Naive thymus-derived CD4-positive, alpha-beta T cell (primary cell): ENCODE measurements at regions of chr4 and their contacts with region 1.

Region 1: DNA sequence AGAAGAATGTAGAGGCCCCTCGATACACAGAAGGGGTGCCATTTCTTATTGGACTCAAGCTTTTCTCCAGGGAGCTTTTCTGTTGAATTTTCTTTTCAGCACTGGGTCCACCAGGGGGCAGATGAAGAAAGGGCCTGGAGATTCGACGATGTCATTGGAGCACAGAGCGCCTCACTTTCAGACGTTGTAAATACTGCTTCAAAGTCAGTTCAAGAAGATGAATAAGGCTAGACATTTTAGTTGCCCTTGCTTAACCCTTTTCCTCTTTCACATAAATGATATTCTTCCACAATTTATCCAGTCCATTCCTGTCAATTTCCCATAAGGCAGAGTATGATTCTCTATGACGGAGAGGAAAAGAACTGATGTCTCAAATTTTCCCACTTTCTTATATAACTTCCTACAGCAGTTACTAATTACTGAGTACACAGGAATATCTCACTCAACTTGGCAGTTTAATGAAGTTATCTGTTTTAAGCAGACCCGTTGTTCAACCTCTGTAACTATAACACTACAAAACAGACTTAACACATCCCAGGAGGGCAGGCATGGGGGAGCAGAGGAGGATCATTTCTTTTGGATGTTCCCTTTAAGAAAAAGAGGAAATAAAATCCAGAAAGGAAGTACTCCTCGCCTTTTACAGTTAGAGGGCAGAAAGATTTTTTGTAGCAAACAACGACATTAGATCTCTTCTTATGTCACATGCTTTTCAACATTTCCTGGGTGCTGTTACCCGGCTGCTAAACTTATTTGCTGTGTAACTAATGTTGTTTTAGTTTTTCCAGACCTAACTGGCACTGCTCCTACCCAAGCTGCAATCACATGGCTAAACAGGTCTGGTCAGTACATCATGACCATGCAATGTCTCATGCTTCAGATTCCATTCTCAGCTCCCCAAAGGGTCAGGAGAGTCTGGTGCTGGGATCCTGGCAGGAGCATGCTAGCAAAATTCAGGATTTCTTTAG is 12.2 kb upstream of the CENPU start:
- DNase-seq: peak; percentile 37 to 82 (median 76)
- ATAC-seq: peak; percentile 93
- H3K4me3 ChIP-seq: no peak overlapping the region
- H3K4me3 Mint-ChIP-seq: peak overlapping the region; percentile 18 to 73 (median 54)
- H3K27ac ChIP-seq: peak overlapping the region; percentile 30
- H3K27ac Mint-ChIP-seq: peak overlapping the region; percentile 58 to 90 (median 88)
- H3K4me1 ChIP-seq: peaks cover 0 to 14% of the 10 kb centered on the region in 2 donors
- H3K4me1 Mint-ChIP-seq: peaks cover 16 to 20% (median 18%) of the 10 kb centered on the region in 7 donors
- H3K27me3 ChIP-seq: no peaks in the 10 kb centered on the region
- H3K27me3 Mint-ChIP-seq: peaks cover 0 to 3% (median 0%) of the 10 kb centered on the region in 5 donors

Region 2: DNA sequence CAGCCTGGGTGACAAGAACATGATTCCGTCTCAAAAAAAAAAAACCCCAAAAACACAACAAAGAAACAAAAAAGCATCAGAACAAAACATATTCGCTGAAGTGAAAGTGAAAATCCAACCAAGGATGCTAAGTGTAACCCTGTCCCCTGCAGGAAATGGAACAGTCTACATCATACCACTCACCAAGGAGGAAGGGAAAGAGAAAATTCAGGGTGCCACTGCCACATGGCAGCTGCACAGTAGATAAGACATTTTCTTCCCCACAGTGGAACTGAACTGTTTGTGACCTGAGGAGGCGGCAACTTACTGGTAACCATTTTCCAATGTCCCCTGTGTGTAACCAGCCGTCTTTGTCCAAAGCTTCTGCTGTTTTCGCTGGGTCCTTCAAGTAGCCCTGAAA is 16.0 kb after region 1 on chr4:
- CTCF ChIA-PET with region 1: interaction called, 10 read pairs
- POLR2A ChIA-PET with region 1: no interaction called
- intact Hi-C with region 1: loop called (anchors 1 kb)
- DNase-seq: peak in 8 of 9 donors; percentile 38 to 84 (median 75)
- ATAC-seq: peak; percentile 96
- H3K4me3 ChIP-seq: no peak overlapping the region
- H3K4me3 Mint-ChIP-seq: peak overlapping the region; percentile 6 to 78 (median 66)
- H3K27ac ChIP-seq: peak overlapping the region; percentile 36
- H3K27ac Mint-ChIP-seq: peak overlapping the region; percentile 83 to 94 (median 87)
- H3K4me1 ChIP-seq: peaks cover 5 to 14% of the 10 kb centered on the region in 2 donors
- H3K4me1 Mint-ChIP-seq: peaks cover 0 to 23% (median 20%) of the 10 kb centered on the region in 7 donors
- H3K27me3 ChIP-seq: no peaks in the 10 kb centered on the region
- H3K27me3 Mint-ChIP-seq: no peaks in the 10 kb centered on the region

Region 3: GRCh38 chr4:184983672-184984356 is 237.7 kb after region 1 on chr4:
- CTCF ChIA-PET with region 1: interaction called, 3 read pairs
- POLR2A ChIA-PET with region 1: no interaction called
- intact Hi-C with region 1: loop called (anchors 1 kb)
- DNase-seq: peak in 6 of 9 donors; percentile 37 to 56 (median 48)
- ATAC-seq: peak; percentile 60
- H3K4me3 ChIP-seq: peak overlapping the region; percentile 50
- H3K4me3 Mint-ChIP-seq: no peak overlapping the region
- H3K27ac ChIP-seq: no peak overlapping the region
- H3K27ac Mint-ChIP-seq: no peak overlapping the region
- H3K4me1 ChIP-seq: peaks cover 15 to 17% of the 10 kb centered on the region in 2 donors
- H3K4me1 Mint-ChIP-seq: peaks cover 0 to 2% (median 0%) of the 10 kb centered on the region in 7 donors
- H3K27me3 ChIP-seq: no peaks in the 10 kb centered on the region
- H3K27me3 Mint-ChIP-seq: peaks cover 0 to 6% (median 0%) of the 10 kb centered on the region in 5 donors

Region 4: DNA sequence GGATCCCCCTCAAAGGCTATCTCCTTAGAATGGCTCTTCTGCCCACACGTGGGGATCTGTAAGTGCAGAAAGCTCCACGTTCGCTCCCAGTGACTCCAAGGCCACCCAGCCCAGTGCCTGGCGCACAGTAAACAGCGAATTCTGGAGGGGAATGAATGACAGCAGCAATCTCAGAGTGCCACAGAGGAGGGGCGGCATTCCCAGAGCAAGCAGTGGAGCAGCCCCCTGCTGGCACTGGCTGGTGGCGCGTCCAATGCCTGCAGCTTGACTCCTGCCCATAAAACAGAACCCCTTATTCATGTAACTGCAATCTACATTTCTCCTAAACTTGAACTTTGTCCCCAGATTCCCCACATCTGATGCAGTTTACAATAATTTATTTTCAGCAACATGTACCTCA is 265.3 kb after region 1 on chr4:
- CTCF ChIA-PET with region 1: no interaction called
- POLR2A ChIA-PET with region 1: no interaction called
- intact Hi-C with region 1: loop called in 1 of 2 experiments (anchors 1 kb)
- DNase-seq: peak in 4 of 9 donors; percentile 11 to 22 (median 12)
- ATAC-seq: no peak
- H3K4me3 ChIP-seq: no peak overlapping the region
- H3K4me3 Mint-ChIP-seq: no peak overlapping the region
- H3K27ac ChIP-seq: no peak overlapping the region
- H3K27ac Mint-ChIP-seq: no peak overlapping the region
- H3K4me1 ChIP-seq: no peaks in the 10 kb centered on the region
- H3K4me1 Mint-ChIP-seq: peaks cover 0 to 17% (median 7%) of the 10 kb centered on the region in 7 donors
- H3K27me3 ChIP-seq: no peaks in the 10 kb centered on the region
- H3K27me3 Mint-ChIP-seq: peaks cover 74 to 96% (median 76%) of the 10 kb centered on the region in 5 donors

Region 5: DNA sequence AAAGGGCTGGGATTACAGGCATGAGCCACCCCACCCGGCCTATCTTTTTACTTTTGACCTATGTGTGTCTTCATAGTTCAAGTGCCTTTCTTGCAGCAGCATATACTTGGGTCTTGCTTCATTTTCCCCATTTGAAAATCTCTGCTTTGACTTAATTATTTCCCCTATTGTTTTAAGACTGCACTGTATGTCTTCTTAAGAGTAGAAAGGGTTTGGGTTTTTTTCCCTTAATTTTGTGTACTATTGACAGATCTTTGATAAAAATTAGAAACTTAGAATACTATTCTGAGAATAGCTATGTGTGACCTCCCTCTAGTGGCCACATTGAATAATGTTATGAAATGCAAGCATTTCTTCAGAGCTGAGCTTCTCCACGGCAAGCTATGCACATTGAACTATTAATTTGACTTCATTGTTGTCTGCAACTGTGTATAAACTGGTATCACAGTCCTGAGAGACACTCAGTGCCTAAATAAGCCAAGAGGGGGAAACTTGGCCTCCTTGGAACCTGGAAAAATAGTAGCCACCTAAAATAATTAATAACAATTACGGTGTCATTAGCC is 388.3 kb after region 1 on chr4:
- CTCF ChIA-PET with region 1: interaction called, 8 read pairs
- POLR2A ChIA-PET with region 1: no interaction called
- intact Hi-C with region 1: loop called (anchors 1 to 2 kb)
- DNase-seq: peak in 6 of 9 donors; percentile 22 to 52 (median 40)
- ATAC-seq: peak; percentile 86
- H3K4me3 ChIP-seq: no peak overlapping the region
- H3K4me3 Mint-ChIP-seq: no peak overlapping the region
- H3K27ac ChIP-seq: no peak overlapping the region
- H3K27ac Mint-ChIP-seq: no peak overlapping the region
- H3K4me1 ChIP-seq: no peaks in the 10 kb centered on the region
- H3K4me1 Mint-ChIP-seq: no peaks in the 10 kb centered on the region
- H3K27me3 ChIP-seq: peaks cover 0 to 3% of the 10 kb centered on the region in 2 donors
- H3K27me3 Mint-ChIP-seq: peaks cover 29 to 68% (median 40%) of the 10 kb centered on the region in 5 donors

Region 6: DNA sequence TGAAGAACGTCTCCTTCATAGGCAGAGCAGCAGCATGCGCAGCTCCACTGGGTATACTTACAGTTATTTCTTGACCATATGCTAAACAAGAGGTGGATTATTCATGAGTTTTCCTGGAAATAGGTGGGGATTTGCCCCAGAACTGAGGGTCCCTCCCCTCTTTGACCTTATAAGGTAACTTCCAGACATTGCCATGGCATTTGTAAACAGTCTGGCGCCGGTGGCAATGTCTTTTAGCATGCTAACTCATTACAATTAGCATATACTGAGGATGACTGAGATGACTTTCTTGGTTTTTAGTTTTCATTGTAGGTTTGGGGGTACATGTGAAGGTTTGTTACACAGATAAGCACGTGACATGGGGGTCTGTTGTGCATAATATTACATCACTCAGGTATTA is 1711.9 kb after region 1 on chr4:
- CTCF ChIA-PET with region 1: no interaction called
- POLR2A ChIA-PET with region 1: no interaction called
- intact Hi-C with region 1: no loop called
- DNase-seq: no peak
- ATAC-seq: no peak
- H3K4me3 ChIP-seq: no peak overlapping the region
- H3K4me3 Mint-ChIP-seq: no peak overlapping the region
- H3K27ac ChIP-seq: no peak overlapping the region
- H3K27ac Mint-ChIP-seq: no peak overlapping the region
- H3K4me1 ChIP-seq: no peaks in the 10 kb centered on the region
- H3K4me1 Mint-ChIP-seq: no peaks in the 10 kb centered on the region
- H3K27me3 ChIP-seq: no peaks in the 10 kb centered on the region
- H3K27me3 Mint-ChIP-seq: peaks cover 0 to 17% (median 0%) of the 10 kb centered on the region in 5 donors